K562 (cell line): ENCODE measurements at regions of chr4 and their contacts with region 1.

Region 1: DNA sequence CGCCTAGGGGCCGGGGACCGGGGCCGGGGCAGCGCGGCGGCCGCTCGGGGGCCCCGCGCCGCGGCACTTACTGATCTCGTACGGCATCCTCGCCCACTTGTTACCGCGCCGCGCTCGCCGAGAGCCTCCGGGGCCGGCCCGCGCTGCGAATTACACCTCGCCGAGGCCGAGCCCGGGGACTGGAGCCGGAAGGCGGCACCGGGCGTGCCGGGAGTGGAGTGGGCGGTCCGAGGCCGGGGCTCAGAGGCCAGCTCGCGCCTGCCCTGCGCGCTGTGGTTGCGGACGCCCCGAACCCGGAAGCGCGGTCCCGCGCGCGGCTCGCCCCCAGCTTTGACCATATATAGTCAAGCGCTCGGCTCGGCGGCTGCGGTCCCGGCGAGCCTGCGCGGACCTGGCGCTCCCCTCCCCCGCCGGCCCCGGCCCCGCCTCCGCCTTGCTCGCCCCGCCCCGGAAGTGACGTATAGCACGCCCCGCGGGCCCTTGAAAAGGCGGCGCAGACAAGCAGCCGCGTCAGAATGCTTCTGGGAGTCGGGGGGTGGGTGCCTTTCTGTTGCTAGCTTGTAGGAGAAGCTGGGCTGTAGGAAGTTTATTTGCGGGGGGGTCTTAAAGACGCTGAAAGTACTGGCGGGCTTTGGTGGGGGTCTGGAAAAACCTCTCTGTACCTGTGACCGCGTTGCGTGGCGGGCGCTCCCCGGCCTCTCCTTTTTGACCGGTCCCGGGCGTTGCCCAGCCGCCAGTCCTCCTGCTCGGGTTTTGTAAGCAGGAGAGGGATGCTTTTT is at the start of gene WDR1:
- DNase-seq: peak; percentile 91 to 98 (median 92)
- ATAC-seq: peak; percentile 95
- H3K4me3 ChIP-seq: peak within 1 kb of the TSS; percentile 72
- H3K27ac ChIP-seq: peak within 1 kb of the TSS; percentile 89
- H3K4me1 ChIP-seq: peaks cover 19 to 24% of the 10 kb centered on the region in 2 experiments
- H3K27me3 ChIP-seq: no peaks in the 10 kb centered on the region
- CTCF ChIP-seq: no peak
- EP300 ChIP-seq: no peak
- POLR2A ChIP-seq: peak; percentile 99
- RAD21 ChIP-seq: no peak; a peak in 2 of 4 replicates
- polyA plus RNA-seq, gene WDR1: 16.1 to 23.0 TPM

Region 2: GRCh38 chr4:10089346-10089745 is 27.4 kb before region 1 on chr4:
- CTCF ChIA-PET with region 1: no interaction called
- POLR2A ChIA-PET with region 1: interaction called, 64 read pairs
- in situ Hi-C with region 1: no loop called
- intact Hi-C with region 1: no loop called
- DNase-seq: no peak
- ATAC-seq: no peak
- H3K4me3 ChIP-seq: no peak overlapping the region
- H3K27ac ChIP-seq: no peak overlapping the region
- H3K4me1 ChIP-seq: peaks cover 0 to 9% of the 10 kb centered on the region in 2 experiments; a peak in 1 of 5 replicates
- H3K27me3 ChIP-seq: no peaks in the 10 kb centered on the region
- CTCF ChIP-seq: peak; percentile 2 to 39 (median 31); a peak in 2 of 6 replicates
- EP300 ChIP-seq: no peak
- POLR2A ChIP-seq: no peak
- RAD21 ChIP-seq: no peak

Region 3: DNA sequence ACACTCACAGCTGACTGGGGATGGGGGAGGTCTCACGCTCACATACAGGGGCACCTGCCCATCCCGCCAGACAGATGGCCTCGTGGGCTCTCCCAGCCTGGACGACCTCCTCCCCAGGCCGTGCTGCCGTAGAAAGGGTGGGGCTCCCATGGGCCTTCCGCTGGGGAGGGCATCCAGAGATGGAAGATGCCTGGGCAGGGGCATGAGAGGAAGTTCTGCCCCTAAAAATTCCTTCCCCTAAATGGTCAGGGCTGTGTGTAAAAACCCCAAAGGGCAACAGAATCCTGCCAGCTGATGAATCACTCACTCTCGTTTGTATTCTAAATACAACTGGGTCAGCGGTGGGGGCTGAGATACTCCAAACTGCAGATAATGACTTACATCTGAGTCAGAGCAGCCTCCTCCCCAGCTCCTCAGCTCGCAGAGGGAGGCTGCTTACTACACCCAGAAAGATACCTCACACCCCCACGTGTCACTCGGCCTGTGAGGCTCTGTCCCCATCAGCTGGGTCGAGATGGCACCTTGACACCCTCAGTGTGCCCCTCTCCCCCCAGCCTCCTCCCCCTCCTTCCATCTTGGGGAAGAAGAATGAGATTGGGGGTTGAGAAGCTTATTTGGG is 10.2 kb before region 1 on chr4:
- CTCF ChIA-PET with region 1: no interaction called
- POLR2A ChIA-PET with region 1: interaction called, 135 read pairs
- in situ Hi-C with region 1: no loop called
- intact Hi-C with region 1: no loop called
- DNase-seq: peak in 3 of 4 experiments; percentile 49 to 87 (median 84)
- ATAC-seq: peak; percentile 81
- H3K4me3 ChIP-seq: no peak overlapping the region
- H3K27ac ChIP-seq: peak overlapping the region; percentile 68; the same call in 2 of the 3 replicates
- H3K4me1 ChIP-seq: peaks cover 28 to 30% of the 10 kb centered on the region in 2 experiments
- H3K27me3 ChIP-seq: no peaks in the 10 kb centered on the region
- CTCF ChIP-seq: no peak
- EP300 ChIP-seq: no peak
- POLR2A ChIP-seq: no peak
- RAD21 ChIP-seq: no peak

Region 4: GRCh38 chr4:10140866-10141759 is 24.3 kb after region 1 on chr4:
- CTCF ChIA-PET with region 1: no interaction called
- POLR2A ChIA-PET with region 1: interaction called, 216 read pairs
- in situ Hi-C with region 1: no loop called
- intact Hi-C with region 1: no loop called
- DNase-seq: peak; percentile 34 to 54 (median 50)
- ATAC-seq: peak; percentile 91
- H3K4me3 ChIP-seq: no peak overlapping the region
- H3K27ac ChIP-seq: no peak overlapping the region
- H3K4me1 ChIP-seq: no peaks in the 10 kb centered on the region
- H3K27me3 ChIP-seq: peaks cover 37 to 71% of the 10 kb centered on the region in 2 experiments; a peak in 3 of 5 replicates
- CTCF ChIP-seq: peak; percentile 60 to 82 (median 63); a peak in 5 of 6 replicates
- EP300 ChIP-seq: no peak
- POLR2A ChIP-seq: no peak
- RAD21 ChIP-seq: peak in 1 of 2 experiments; percentile 53; a peak in 2 of 4 replicates

Region 5: GRCh38 chr4:10164877-10165283 is 48.1 kb after region 1 on chr4:
- CTCF ChIA-PET with region 1: no interaction called
- POLR2A ChIA-PET with region 1: interaction called, 65 read pairs
- in situ Hi-C with region 1: no loop called
- intact Hi-C with region 1: no loop called
- DNase-seq: peak; percentile 68 to 86 (median 72)
- ATAC-seq: peak; percentile 64
- H3K4me3 ChIP-seq: no peak overlapping the region
- H3K27ac ChIP-seq: peak overlapping the region; percentile 15; the same call in 1 of the 3 replicates
- H3K4me1 ChIP-seq: peaks cover 0 to 60% of the 10 kb centered on the region in 2 experiments; a peak in 4 of 5 replicates
- H3K27me3 ChIP-seq: no peaks in the 10 kb centered on the region
- CTCF ChIP-seq: peak; percentile 72 to 88 (median 83)
- EP300 ChIP-seq: no peak; the same call in 1 of the 2 replicates
- POLR2A ChIP-seq: no peak
- RAD21 ChIP-seq: peak; percentile 89 to 96

Region 6: DNA sequence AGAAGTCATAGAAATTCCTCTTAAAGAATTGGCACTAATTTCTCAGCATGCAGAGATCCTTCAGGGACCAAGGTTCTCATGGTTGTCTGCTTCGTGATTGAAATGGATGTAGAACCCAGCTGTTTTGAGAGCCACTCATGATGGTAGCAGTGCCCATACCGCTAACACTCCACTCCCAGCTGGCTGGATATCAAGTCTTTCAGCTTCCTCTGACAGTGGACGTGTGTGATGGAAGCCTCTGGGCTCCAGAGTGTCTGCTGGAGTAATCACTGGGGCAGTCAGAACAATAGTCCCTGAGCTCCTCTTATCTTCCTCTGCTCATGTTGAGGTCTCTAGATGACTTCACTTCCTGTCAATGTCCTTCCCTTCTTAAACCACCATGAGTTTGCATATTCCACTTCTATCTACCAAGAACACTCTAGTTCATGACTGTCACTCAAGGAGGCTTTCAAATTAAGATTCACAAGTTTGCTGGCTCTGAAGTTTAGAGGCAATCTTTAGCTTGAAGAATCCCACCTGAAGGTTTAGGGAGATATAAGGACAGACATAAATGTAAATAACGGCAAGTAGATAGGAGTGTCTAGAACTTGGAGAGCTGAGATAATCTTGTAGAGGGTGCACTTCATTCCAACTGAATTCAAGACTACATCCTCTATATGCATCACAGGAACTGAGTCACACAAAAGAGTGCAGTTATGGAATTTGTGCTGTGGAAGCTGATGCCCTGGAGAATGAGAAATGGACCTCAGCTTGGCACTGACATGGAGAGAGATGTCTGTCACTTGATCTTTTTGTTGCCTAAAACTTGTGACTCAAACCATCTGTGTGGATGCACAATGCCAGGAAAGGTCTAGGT is 64.4 kb after region 1 on chr4:
- CTCF ChIA-PET with region 1: no interaction called
- POLR2A ChIA-PET with region 1: interaction called, 41 read pairs
- in situ Hi-C with region 1: no loop called
- intact Hi-C with region 1: loop called (anchors 2 kb)
- DNase-seq: peak; percentile 90 to 96 (median 94)
- ATAC-seq: peak; percentile 83
- H3K4me3 ChIP-seq: no peak overlapping the region
- H3K27ac ChIP-seq: peak overlapping the region; percentile 100
- H3K4me1 ChIP-seq: peaks cover 30 to 85% of the 10 kb centered on the region in 2 experiments
- H3K27me3 ChIP-seq: no peaks in the 10 kb centered on the region
- CTCF ChIP-seq: no peak
- EP300 ChIP-seq: peak; percentile 99
- POLR2A ChIP-seq: peak; percentile 82
- RAD21 ChIP-seq: peak in 1 of 2 experiments; percentile 19; a peak in 1 of 4 replicates

Region 7: DNA sequence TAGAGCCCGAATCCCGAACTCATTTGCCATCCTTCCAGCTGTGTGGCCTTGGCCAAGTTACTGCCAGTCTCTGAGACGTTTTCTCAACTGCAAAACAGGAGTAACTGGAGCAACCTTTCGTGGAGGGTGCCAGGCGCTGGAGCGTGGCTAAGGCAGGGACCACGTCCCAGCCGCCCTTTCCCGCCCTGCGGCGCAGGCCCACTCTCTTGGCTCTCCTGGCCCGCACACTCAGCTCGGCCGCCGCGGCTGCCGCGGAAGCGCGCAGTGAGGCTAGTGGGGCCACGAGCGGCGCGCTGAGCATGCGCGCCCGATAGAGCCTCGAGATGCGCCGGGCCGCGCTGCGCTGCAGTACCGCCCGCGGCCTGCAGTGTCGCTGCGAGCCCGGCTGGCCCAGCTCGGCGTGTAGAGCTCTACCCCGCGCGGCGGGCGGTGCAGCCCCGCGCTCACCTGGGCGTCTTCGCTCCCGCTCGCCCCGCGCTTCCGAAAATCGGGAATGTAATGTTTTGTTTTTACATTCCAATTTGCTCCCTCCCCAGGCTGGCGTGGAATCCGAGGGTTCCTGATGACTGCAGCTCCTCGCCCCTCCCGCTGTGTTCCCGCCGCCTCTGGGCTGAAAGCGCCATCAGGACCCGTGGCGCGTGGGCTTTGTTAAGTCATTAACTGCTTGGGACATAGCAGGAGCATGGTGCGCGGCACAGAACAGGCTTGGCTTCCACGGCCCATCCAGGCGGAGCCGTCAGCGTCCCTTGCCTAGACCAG is 344.5 kb after region 1 on chr4:
- CTCF ChIA-PET with region 1: no interaction called
- POLR2A ChIA-PET with region 1: interaction called, 19 read pairs
- in situ Hi-C with region 1: no loop called
- intact Hi-C with region 1: no loop called
- DNase-seq: peak; percentile 83 to 87 (median 84)
- ATAC-seq: peak; percentile 73
- H3K4me3 ChIP-seq: peak overlapping the region; percentile 52
- H3K27ac ChIP-seq: peak overlapping the region; percentile 86
- H3K4me1 ChIP-seq: peaks cover 9 to 30% of the 10 kb centered on the region in 2 experiments; a peak in 4 of 5 replicates
- H3K27me3 ChIP-seq: no peaks in the 10 kb centered on the region
- CTCF ChIP-seq: peak; percentile 78 to 87 (median 84)
- EP300 ChIP-seq: no peak
- POLR2A ChIP-seq: peak; percentile 62; the same call in 1 of the 2 replicates
- RAD21 ChIP-seq: peak; percentile 54 to 57; a peak in 3 of 4 replicates